PC-9 (cell line): ENCODE measurements at regions of chr2 and their contacts with region 1.

Region 1: GRCh38 chr2:234335661-234336228 is 161.1 kb downstream of the ARL4C start:
- DNase-seq: peak in 1 of 2 experiments; percentile 39
- H3K4me3 ChIP-seq: no peak overlapping the region
- H3K27ac ChIP-seq: no peak overlapping the region
- H3K4me1 ChIP-seq: peaks cover 16% of the 10 kb centered on the region
- H3K27me3 ChIP-seq: no peaks in the 10 kb centered on the region
- CTCF ChIP-seq: no peak

Region 2: GRCh38 chr2:234304945-234305344 is 30.8 kb before region 1 on chr2:
- CTCF ChIA-PET with region 1: interaction called, 13 read pairs
- POLR2A ChIA-PET with region 1: interaction called, 3 read pairs
- intact Hi-C with region 1: no loop called
- DNase-seq: peak; percentile 79 to 95
- H3K4me3 ChIP-seq: no peak overlapping the region
- H3K27ac ChIP-seq: peak overlapping the region; percentile 60
- H3K4me1 ChIP-seq: peaks cover 43% of the 10 kb centered on the region
- H3K27me3 ChIP-seq: no peaks in the 10 kb centered on the region
- CTCF ChIP-seq: no peak

Region 3: DNA sequence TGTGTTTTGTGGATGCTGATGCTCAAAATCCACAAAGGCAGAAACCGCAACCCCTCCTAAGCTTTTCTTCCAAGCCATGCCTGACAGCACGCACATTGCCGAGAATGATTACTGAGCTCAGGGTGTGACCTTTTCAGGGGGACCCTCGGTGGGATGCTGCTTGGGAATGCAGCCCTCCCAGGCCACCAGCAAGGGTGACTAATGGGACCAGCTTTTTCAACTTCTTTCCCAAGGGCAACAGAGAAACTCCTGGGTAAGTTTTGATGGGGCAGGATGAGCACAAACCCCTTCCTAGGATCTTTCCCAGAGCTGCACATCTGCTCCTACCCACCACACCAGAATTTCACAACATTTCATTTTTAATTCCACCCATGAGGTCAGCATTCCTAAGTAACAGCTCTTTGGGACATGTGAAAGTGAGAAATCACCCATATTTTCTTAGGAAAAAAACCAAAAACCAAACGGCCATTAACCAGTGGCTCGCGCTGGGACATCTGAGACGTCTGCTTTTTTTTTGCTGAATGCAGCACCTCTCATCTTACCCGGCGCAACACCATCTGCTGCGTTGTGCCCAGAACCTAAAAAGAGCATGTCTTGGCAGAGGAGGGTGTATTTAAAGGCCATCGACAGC is 42.1 kb after region 1 on chr2:
- CTCF ChIA-PET with region 1: no interaction called
- POLR2A ChIA-PET with region 1: no interaction called
- intact Hi-C with region 1: no loop called
- DNase-seq: peak in 1 of 2 experiments; percentile 15
- H3K4me3 ChIP-seq: no peak overlapping the region
- H3K27ac ChIP-seq: no peak overlapping the region
- H3K4me1 ChIP-seq: peaks cover 19% of the 10 kb centered on the region
- H3K27me3 ChIP-seq: no peaks in the 10 kb centered on the region
- CTCF ChIP-seq: no peak

Region 4: GRCh38 chr2:234951664-234952269 is 616.0 kb after region 1 on chr2 and contains the start of gene SH3BP4:
- CTCF ChIA-PET with region 1: no interaction called
- POLR2A ChIA-PET with region 1: no interaction called
- intact Hi-C with region 1: no loop called
- DNase-seq: peak; percentile 54 to 91
- H3K4me3 ChIP-seq: peak within 1 kb of the TSS; percentile 97
- H3K27ac ChIP-seq: peak within 1 kb of the TSS; percentile 53
- H3K4me1 ChIP-seq: peaks cover 38% of the 10 kb centered on the region
- H3K27me3 ChIP-seq: no peaks in the 10 kb centered on the region
- CTCF ChIP-seq: no peak
- total RNA-seq, gene SH3BP4: 131 and 135 TPM in 2 replicates